Naive thymus-derived CD4-positive, alpha-beta T cell (primary cell): ENCODE measurements at regions of chr1 and their contacts with region 1.

Region 1: GRCh38 chr1:100061681-100062080 is 71.0 kb downstream of the SASS6 start:
- DNase-seq: no peak
- ATAC-seq: no peak
- H3K4me3 ChIP-seq: no peak overlapping the region
- H3K4me3 Mint-ChIP-seq: no peak overlapping the region
- H3K27ac ChIP-seq: no peak overlapping the region
- H3K27ac Mint-ChIP-seq: peak overlapping the region in 1 of 9 donors; percentile 28
- H3K4me1 ChIP-seq: peaks cover 3 to 6% of the 10 kb centered on the region in 2 donors
- H3K4me1 Mint-ChIP-seq: peaks cover 21 to 42% (median 32%) of the 10 kb centered on the region in 7 donors
- H3K27me3 ChIP-seq: no peaks in the 10 kb centered on the region
- H3K27me3 Mint-ChIP-seq: no peaks in the 10 kb centered on the region

Region 2: GRCh38 chr1:99877568-99877967 is 184.1 kb before region 1 on chr1:
- CTCF ChIA-PET with region 1: no interaction called
- POLR2A ChIA-PET with region 1: no interaction called
- intact Hi-C with region 1: no loop called
- DNase-seq: no peak
- ATAC-seq: no peak
- H3K4me3 ChIP-seq: no peak overlapping the region
- H3K4me3 Mint-ChIP-seq: no peak overlapping the region
- H3K27ac ChIP-seq: no peak overlapping the region
- H3K27ac Mint-ChIP-seq: no peak overlapping the region
- H3K4me1 ChIP-seq: no peaks in the 10 kb centered on the region
- H3K4me1 Mint-ChIP-seq: no peaks in the 10 kb centered on the region
- H3K27me3 ChIP-seq: no peaks in the 10 kb centered on the region
- H3K27me3 Mint-ChIP-seq: no peaks in the 10 kb centered on the region

Region 3: GRCh38 chr1:100051401-100051800 is 10.3 kb before region 1 on chr1:
- CTCF ChIA-PET with region 1: no interaction called
- POLR2A ChIA-PET with region 1: no interaction called
- intact Hi-C with region 1: loop called in 1 of 2 experiments (anchors 2 kb)
- DNase-seq: no peak
- ATAC-seq: no peak
- H3K4me3 ChIP-seq: no peak overlapping the region
- H3K4me3 Mint-ChIP-seq: peak overlapping the region in 1 of 10 donors; percentile 20
- H3K27ac ChIP-seq: no peak overlapping the region
- H3K27ac Mint-ChIP-seq: peak overlapping the region in 1 of 9 donors; percentile 58
- H3K4me1 ChIP-seq: peaks cover 7 to 32% of the 10 kb centered on the region in 2 donors
- H3K4me1 Mint-ChIP-seq: peaks cover 25 to 72% (median 65%) of the 10 kb centered on the region in 7 donors
- H3K27me3 ChIP-seq: no peaks in the 10 kb centered on the region
- H3K27me3 Mint-ChIP-seq: no peaks in the 10 kb centered on the region

Region 4: GRCh38 chr1:100168051-100168450 is 106.4 kb after region 1 on chr1:
- CTCF ChIA-PET with region 1: no interaction called
- POLR2A ChIA-PET with region 1: no interaction called
- intact Hi-C with region 1: no loop called
- DNase-seq: no peak
- ATAC-seq: no peak
- H3K4me3 ChIP-seq: no peak overlapping the region
- H3K4me3 Mint-ChIP-seq: no peak overlapping the region
- H3K27ac ChIP-seq: no peak overlapping the region
- H3K27ac Mint-ChIP-seq: no peak overlapping the region
- H3K4me1 ChIP-seq: no peaks in the 10 kb centered on the region
- H3K4me1 Mint-ChIP-seq: no peaks in the 10 kb centered on the region
- H3K27me3 ChIP-seq: no peaks in the 10 kb centered on the region
- H3K27me3 Mint-ChIP-seq: peaks cover 0 to 8% (median 0%) of the 10 kb centered on the region in 5 donors

Region 5: GRCh38 chr1:100921109-100921706 is 859.5 kb after region 1 on chr1:
- CTCF ChIA-PET with region 1: no interaction called
- POLR2A ChIA-PET with region 1: no interaction called
- intact Hi-C with region 1: no loop called
- DNase-seq: peak in 6 of 9 donors; percentile 35 to 62 (median 50)
- ATAC-seq: peak; percentile 77
- H3K4me3 ChIP-seq: no peak overlapping the region
- H3K4me3 Mint-ChIP-seq: peak overlapping the region in 1 of 10 donors; percentile 6
- H3K27ac ChIP-seq: peak overlapping the region; percentile 38
- H3K27ac Mint-ChIP-seq: peak overlapping the region in 8 of 9 donors; percentile 28 to 92 (median 88)
- H3K4me1 ChIP-seq: peaks cover 27 to 37% of the 10 kb centered on the region in 2 donors
- H3K4me1 Mint-ChIP-seq: peaks cover 13 to 62% (median 43%) of the 10 kb centered on the region in 7 donors
- H3K27me3 ChIP-seq: no peaks in the 10 kb centered on the region
- H3K27me3 Mint-ChIP-seq: no peaks in the 10 kb centered on the region